ENCODE measurements at regions of chr15 and their contacts with region 1.

Region 1: DNA sequence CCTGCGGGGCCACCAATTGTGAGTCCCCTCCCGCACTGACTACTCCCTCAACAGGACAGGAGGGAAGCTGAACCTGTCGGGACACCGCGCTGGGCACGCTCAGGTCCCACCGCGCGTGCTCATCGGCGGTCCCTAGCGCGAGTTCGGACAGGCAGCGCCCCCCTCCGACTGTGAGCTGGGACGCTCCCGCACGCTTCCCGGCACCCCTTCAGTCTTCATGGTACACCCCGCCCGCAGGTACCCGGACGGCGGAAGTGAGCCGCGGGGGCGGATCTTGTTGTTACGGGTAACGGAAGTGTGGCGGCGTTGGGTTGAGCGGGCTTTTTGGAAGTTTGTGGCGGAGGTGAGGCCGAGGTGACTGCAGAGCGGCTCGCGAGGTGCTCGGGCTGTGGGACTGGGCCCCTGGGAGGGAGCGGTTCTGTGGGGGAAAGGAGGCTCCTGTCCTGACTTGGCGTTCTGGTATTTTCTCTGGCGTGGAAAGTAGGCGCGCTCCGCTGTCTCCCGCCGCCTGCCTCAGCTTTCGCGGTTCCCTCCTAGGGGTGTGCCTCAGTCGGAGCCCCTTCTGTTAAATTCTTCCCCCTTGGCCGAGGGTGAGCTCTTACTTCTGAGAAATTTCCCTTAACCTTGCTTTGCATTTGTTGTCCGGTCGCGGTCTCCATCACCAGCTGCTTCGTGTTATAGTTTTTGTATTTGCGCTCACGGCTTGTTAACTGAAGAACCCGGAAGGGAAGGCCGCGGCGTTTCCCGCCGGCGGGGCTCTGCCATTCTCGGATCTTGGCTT is at the start of gene FANCI:
- DNase-seq: peak; percentile 96 to 98 (median 96)
- ATAC-seq: peak; percentile 96
- H3K4me3 ChIP-seq: peak within 1 kb of the TSS; percentile 56
- H3K27ac ChIP-seq: peak within 1 kb of the TSS; percentile 76
- H3K4me1 ChIP-seq: peaks cover 14 to 15% of the 10 kb centered on the region in 2 experiments; a peak in 4 of 5 replicates
- H3K27me3 ChIP-seq: no peaks in the 10 kb centered on the region
- CTCF ChIP-seq: peak; percentile 70 to 94 (median 90)
- EP300 ChIP-seq: peak; percentile 41; the same call in 1 of the 2 replicates
- POLR2A ChIP-seq: peak; percentile 89
- RAD21 ChIP-seq: peak; percentile 71 to 81
- polyA plus RNA-seq, gene FANCI: 76.0 to 137 TPM

Region 2: GRCh38 chr15:89230277-89230676 is 13.6 kb before region 1 on chr15:
- CTCF ChIA-PET with region 1: no interaction called
- POLR2A ChIA-PET with region 1: interaction called, 12 read pairs
- in situ Hi-C with region 1: no loop called
- intact Hi-C with region 1: no loop called
- DNase-seq: peak in 3 of 4 experiments; percentile 40 to 62 (median 59)
- ATAC-seq: peak; percentile 86
- H3K4me3 ChIP-seq: no peak overlapping the region
- H3K27ac ChIP-seq: no peak overlapping the region
- H3K4me1 ChIP-seq: peaks cover 12 to 20% of the 10 kb centered on the region in 2 experiments; a peak in 4 of 5 replicates
- H3K27me3 ChIP-seq: no peaks in the 10 kb centered on the region
- CTCF ChIP-seq: peak; percentile 32 to 51 (median 46); a peak in 4 of 6 replicates
- EP300 ChIP-seq: no peak
- POLR2A ChIP-seq: no peak
- RAD21 ChIP-seq: no peak; a peak in 1 of 4 replicates

Region 3: GRCh38 chr15:89419382-89419984 is 175.6 kb after region 1 on chr15:
- CTCF ChIA-PET with region 1: no interaction called
- POLR2A ChIA-PET with region 1: no interaction called
- in situ Hi-C with region 1: no loop called
- intact Hi-C with region 1: no loop called
- DNase-seq: peak; percentile 62 to 74 (median 67)
- ATAC-seq: peak; percentile 87
- H3K4me3 ChIP-seq: no peak overlapping the region
- H3K27ac ChIP-seq: no peak overlapping the region
- H3K4me1 ChIP-seq: peaks cover 0 to 6% of the 10 kb centered on the region in 2 experiments; a peak in 2 of 5 replicates
- H3K27me3 ChIP-seq: peaks cover 0 to 23% of the 10 kb centered on the region in 2 experiments; a peak in 3 of 5 replicates
- CTCF ChIP-seq: no peak
- EP300 ChIP-seq: no peak
- POLR2A ChIP-seq: no peak
- RAD21 ChIP-seq: no peak

Region 4: DNA sequence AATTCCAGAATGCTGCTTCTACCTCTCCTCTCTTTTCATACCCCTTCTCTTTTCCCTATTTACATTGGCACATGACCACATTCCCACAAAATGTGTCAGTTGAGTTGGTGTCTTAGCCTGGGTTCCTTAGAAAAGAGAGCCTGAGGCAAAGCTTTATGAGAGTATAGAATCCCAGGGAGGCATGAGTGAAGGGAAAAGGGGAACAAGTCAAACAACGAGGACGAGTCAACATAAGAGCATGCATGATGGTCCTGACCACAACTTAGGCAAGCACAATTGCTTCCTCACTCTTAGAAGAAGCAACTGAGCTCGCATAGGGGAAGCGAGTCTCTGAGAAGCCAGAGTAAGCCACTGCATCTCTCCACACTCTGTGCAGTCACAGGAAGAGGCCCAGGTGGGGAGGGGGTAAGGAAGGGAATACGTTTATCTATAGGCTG is 1092.8 kb after region 1 on chr15:
- CTCF ChIA-PET with region 1: no interaction called
- POLR2A ChIA-PET with region 1: no interaction called
- in situ Hi-C with region 1: no loop called
- intact Hi-C with region 1: no loop called
- DNase-seq: no peak
- ATAC-seq: peak; percentile 66
- H3K4me3 ChIP-seq: no peak overlapping the region
- H3K27ac ChIP-seq: no peak overlapping the region
- H3K4me1 ChIP-seq: no peaks in the 10 kb centered on the region; a peak in 1 of 5 replicates
- H3K27me3 ChIP-seq: no peaks in the 10 kb centered on the region
- CTCF ChIP-seq: no peak
- EP300 ChIP-seq: no peak
- POLR2A ChIP-seq: no peak
- RAD21 ChIP-seq: no peak